Activated B cell treated with CpG ODN at 0.5 μM for 24 hours (primary cell): ENCODE measurements at regions of chr18 and their contacts with region 1.

Region 1: DNA sequence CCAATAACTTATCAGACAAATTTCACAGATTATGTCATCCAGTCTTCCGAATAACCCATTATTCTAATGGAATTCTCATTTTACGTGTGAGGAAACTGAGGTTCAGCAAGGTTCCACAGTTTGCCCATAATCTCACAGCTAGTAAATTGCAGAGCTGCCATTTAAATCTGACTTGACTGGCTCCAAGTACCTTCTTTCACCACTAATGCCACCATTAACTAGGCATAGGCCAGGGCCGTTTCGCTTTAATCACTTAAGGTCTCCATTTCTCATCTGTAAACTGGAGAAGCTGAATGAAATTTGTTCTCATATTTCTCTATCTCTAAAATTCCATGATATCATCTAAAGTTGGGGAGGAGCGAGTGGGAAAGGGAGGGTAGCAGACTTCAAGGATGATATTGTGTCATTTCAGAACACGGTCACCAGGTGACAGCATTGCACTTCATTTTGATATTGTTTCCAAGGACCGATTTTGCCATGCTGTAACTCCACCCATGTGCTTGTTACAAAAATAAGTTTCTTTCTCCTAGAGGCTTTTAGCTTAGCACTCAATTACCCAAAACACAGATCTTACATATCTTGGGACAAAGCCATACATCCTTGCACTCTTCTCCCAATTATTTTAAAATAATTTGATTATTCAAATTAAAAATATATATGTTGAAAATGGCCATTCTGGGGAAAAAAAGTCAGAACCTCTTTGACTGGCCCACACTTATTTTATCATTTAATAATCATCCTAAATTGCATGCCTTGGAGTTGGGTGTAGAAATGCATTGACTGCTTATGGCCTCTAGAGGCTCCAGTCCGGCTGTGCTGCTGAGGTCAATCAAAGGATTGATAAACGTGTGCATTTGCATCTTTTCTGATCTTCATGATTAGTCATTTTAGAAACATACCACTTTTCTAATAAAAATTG is 123.8 kb downstream of the AKAIN1 start:
- DNase-seq: no peak
- ATAC-seq: no peak
- H3K4me3 Mint-ChIP-seq: no peak overlapping the region
- H3K27ac Mint-ChIP-seq: no peak overlapping the region
- H3K4me1 Mint-ChIP-seq: no peaks in the 10 kb centered on the region
- H3K27me3 Mint-ChIP-seq: peaks cover 2% of the 10 kb centered on the region
- CTCF ChIP-seq: no peak

Region 2: DNA sequence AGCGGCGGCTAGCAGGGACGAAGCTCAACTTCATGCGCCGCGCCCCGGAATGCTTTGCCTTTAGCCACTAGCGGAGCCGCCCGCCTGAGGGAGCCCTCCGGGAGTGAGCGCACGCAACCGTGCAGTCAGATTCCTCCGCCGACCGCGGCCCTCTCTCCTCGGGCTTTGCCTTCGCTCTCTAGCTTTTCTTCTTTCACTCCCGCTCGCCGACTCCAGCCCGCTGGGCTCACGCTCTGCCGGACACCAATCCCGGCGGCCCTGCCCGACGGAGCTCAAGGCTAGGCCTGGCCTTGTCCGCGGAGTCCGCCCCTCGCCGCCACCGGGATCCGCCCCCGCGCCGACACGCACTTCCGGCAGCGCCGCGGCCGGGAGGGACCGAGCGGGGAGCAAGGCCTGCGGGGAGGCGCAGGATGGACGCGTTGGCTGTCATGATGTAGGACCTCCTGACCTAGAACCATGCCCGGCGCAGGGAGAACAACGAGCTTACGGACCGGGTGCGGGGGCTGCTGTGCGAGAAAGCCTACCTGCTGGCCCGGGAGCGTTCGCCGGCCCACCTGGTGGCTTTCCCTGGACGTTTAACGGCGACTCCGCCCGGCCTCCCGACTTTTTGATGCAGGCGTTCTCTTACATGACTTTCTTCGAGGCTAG is 164.6 kb after region 1 on chr18:
- CTCF ChIA-PET with region 1: no interaction called
- POLR2A ChIA-PET with region 1: no interaction called
- intact Hi-C with region 1: no loop called
- DNase-seq: peak; percentile 95
- ATAC-seq: peak; percentile 92
- H3K4me3 Mint-ChIP-seq: peak overlapping the region; percentile 96
- H3K27ac Mint-ChIP-seq: peak overlapping the region; percentile 98
- H3K4me1 Mint-ChIP-seq: peaks cover 39% of the 10 kb centered on the region
- H3K27me3 Mint-ChIP-seq: peaks cover 7% of the 10 kb centered on the region
- CTCF ChIP-seq: no peak

Region 3: DNA sequence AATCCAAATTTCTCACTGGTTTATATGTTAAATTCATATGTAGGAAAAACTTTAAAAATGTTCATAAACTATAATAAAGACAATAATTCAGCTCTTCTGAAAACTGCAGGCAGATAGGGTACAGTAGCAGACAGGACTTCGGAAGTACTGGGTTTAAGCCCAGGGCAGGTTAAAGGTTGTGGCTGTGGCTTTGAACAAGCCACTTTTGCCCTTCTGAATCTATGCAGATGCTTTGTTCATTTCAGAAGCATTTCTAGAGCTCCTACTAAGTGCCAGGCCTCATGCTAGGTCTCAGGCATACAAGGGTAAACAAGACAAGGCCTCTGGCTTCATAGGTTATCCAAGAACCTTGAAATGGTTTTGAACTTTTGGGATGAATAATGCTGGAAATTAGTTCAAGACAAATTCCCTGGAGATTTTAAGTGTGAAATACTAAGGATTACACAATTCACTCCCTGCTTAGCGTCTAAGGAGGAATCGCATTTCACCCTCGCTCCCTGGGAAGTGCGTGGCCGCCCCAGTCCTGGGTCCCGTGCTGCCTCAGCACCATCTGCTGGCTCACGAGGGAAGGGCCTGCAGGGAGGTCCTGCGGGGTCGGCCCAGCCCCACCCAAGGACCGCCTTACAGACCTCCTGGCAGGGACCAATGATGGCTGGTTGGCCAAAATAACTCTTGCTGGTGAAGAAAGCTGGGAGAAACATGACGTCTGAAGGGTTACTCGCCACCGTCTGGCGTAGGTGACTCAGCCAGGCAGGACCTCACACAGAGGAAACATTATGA is 1409.1 kb after region 1 on chr18:
- CTCF ChIA-PET with region 1: no interaction called
- POLR2A ChIA-PET with region 1: no interaction called
- intact Hi-C with region 1: loop called (anchors 5 kb)
- DNase-seq: peak; percentile 18
- ATAC-seq: peak; percentile 42
- H3K4me3 Mint-ChIP-seq: no peak overlapping the region
- H3K27ac Mint-ChIP-seq: no peak overlapping the region
- H3K4me1 Mint-ChIP-seq: no peaks in the 10 kb centered on the region
- H3K27me3 Mint-ChIP-seq: peaks cover 4% of the 10 kb centered on the region
- CTCF ChIP-seq: no peak